ENCODE measurements at regions of chr1 and their contacts with region 1.

Region 1: GRCh38 chr1:12132092-12132491 is 34.7 kb upstream of the TNFRSF1B start:
- DNase-seq: peak in 1 of 14 experiments; percentile 41
- ATAC-seq: no peak
- H3K4me3 ChIP-seq: no peak overlapping the region
- H3K4me3 Mint-ChIP-seq: peak overlapping the region; percentile 38
- H3K27ac ChIP-seq: peak overlapping the region; percentile 50 to 81
- H3K27ac Mint-ChIP-seq: peak overlapping the region; percentile 84
- H3K4me1 ChIP-seq: peaks cover 62% of the 10 kb centered on the region
- H3K4me1 Mint-ChIP-seq: peaks cover 32% of the 10 kb centered on the region
- H3K27me3 ChIP-seq: no peaks in the 10 kb centered on the region
- H3K27me3 Mint-ChIP-seq: no peaks in the 10 kb centered on the region
- CTCF ChIP-seq: no peak

Region 2: GRCh38 chr1:12161662-12162458 is 29.8 kb after region 1 on chr1:
- CTCF ChIA-PET with region 1: no interaction called
- POLR2A ChIA-PET with region 1: interaction called, 13 read pairs
- intact Hi-C with region 1: no loop called
- DNase-seq: peak; percentile 43 to 93 (median 64)
- ATAC-seq: peak; percentile 75
- H3K4me3 ChIP-seq: no peak overlapping the region
- H3K4me3 Mint-ChIP-seq: peak overlapping the region; percentile 59
- H3K27ac ChIP-seq: peak overlapping the region; percentile 47 to 73
- H3K27ac Mint-ChIP-seq: peak overlapping the region; percentile 83
- H3K4me1 ChIP-seq: peaks cover 94% of the 10 kb centered on the region
- H3K4me1 Mint-ChIP-seq: peaks cover 69% of the 10 kb centered on the region
- H3K27me3 ChIP-seq: no peaks in the 10 kb centered on the region
- H3K27me3 Mint-ChIP-seq: no peaks in the 10 kb centered on the region
- CTCF ChIP-seq: no peak